Activated CD4-positive, alpha-beta memory T cell treated with anti-CD3 and anti-CD28 coated beads for 36 hours (primary cell): ENCODE measurements at regions of chr2 and their contacts with region 1.

Region 1: GRCh38 chr2:166825914-166826313 is 62.4 kb upstream of the XIRP2 start:
- DNase-seq: no peak
- H3K4me3 Mint-ChIP-seq: no peak overlapping the region
- H3K27ac Mint-ChIP-seq: no peak overlapping the region
- H3K4me1 Mint-ChIP-seq: no peaks in the 10 kb centered on the region
- H3K27me3 Mint-ChIP-seq: no peaks in the 10 kb centered on the region

Region 2: DNA sequence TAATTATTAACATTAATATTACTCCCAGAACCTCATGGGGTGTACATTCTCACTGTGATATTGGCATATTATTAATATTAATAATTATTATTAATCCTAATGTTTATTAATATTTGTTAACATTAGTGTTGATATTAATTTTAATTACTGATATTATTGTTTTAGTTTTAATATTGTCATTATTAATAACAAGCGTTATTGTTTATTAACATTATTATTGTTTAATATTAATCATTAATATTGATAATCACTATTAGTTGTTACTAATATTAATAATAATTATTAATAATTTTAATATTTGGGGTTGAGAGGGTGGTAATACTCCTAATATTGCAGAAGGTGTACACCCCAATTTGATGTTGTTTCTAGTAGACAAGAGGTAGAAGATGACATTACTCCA is 130.8 kb before region 1 on chr2:
- CTCF ChIA-PET with region 1: no interaction called
- POLR2A ChIA-PET with region 1: no interaction called
- intact Hi-C with region 1: loop called (anchors 5 kb)
- DNase-seq: no peak
- H3K4me3 Mint-ChIP-seq: no peak overlapping the region
- H3K27ac Mint-ChIP-seq: no peak overlapping the region
- H3K4me1 Mint-ChIP-seq: no peaks in the 10 kb centered on the region
- H3K27me3 Mint-ChIP-seq: no peaks in the 10 kb centered on the region

Region 3: DNA sequence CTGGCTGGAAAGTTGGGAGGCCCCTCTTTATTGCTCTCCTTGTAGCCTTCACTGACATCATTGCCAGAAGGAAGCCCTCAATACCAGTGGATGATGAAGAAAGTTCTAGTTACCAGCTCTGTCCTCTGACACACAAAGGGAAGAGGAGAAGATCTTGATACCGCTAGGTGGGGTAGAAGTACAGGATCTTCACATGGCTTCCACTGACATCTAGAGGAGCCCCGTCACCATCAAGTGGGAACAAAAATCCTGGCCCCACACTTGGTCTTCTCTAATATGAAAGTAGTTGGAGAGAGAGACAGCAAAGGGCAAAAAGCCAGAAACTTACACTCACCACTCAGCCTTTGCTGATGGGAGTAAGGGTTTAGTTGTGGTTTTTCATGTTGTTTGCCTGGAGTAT is 74.8 kb after region 1 on chr2:
- CTCF ChIA-PET with region 1: no interaction called
- POLR2A ChIA-PET with region 1: no interaction called
- intact Hi-C with region 1: no loop called
- DNase-seq: no peak
- H3K4me3 Mint-ChIP-seq: no peak overlapping the region
- H3K27ac Mint-ChIP-seq: no peak overlapping the region
- H3K4me1 Mint-ChIP-seq: no peaks in the 10 kb centered on the region
- H3K27me3 Mint-ChIP-seq: no peaks in the 10 kb centered on the region